ENCODE measurements at regions of chr2 and their contacts with region 1.

Region 1: GRCh38 chr2:217988014-217988839 is 14.6 kb downstream of the TNS1 start:
- DNase-seq: peak; percentile 62 to 95 (median 86)

Region 2: DNA sequence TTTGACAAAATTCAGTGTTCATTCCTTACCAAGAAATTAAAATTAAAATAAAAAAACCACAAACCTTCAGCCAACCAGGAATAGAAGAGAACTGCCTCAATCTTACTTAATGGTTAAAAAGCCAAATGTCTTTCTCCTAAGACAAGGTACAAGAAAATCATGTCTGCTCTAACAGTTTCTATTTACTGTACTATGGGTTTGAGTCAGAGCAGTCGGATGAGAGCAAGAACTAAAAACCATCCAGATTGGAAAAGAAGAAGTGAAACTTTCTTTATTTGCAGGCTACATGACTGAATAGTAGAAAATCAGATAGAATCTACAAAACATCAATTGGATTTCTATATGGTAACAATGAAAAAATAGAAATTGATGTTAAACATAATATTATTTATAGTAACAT is 572.9 kb before region 1 on chr2:
- intact Hi-C with region 1: no loop called
- DNase-seq: no peak

Region 3: GRCh38 chr2:217886720-217887309 is 101.4 kb before region 1 on chr2:
- intact Hi-C with region 1: loop called (anchors 5 kb)
- DNase-seq: peak; percentile 53 to 94 (median 86)

Region 4: DNA sequence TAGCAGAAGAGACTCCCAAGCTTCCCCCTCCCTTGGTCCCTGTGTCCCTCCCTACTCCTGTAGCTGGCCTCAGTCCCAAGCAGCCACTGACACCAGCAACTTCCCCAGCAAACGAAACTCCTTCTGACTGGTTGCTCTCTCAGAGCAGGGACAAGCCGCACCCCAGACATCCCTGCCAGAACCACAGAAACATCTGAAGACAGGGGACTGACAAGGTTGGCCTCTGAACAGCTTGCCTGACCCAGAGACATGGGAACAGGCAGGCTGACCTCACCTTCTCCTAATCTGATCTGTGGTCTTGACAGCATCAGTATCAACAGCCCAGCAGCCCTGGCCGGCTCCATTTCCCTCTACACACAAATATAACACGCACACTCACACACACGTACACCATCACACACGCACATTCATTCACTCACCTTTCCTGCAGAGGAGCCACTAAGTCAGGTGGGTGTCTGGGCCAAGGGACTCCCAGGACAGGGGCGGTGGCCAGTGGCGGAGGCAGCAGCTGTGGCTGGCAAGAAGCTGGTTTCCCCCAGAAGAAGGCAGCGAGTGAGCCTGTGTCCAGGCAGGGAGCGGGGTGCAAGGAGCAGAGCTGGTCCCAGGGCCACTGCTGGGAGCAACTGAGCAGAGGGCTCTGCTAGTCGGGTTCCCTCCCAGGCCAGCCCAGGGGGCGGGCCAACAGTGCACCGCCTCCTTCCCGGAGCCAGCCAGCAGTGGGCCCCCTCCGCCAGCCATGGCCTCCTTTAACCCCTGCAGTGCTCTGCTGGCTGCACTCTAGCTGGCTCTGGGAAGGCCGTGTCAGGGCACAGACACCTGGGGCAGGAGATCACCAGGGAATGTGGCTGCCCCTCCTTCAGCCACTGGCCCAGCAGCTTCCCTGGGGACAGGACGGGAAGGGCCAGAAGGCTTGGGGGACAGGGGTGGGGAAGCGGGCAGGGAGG is 44.5 kb before region 1 on chr2:
- intact Hi-C with region 1: loop called (anchors 5 kb)
- DNase-seq: peak; percentile 77 to 93 (median 88)

Region 5: DNA sequence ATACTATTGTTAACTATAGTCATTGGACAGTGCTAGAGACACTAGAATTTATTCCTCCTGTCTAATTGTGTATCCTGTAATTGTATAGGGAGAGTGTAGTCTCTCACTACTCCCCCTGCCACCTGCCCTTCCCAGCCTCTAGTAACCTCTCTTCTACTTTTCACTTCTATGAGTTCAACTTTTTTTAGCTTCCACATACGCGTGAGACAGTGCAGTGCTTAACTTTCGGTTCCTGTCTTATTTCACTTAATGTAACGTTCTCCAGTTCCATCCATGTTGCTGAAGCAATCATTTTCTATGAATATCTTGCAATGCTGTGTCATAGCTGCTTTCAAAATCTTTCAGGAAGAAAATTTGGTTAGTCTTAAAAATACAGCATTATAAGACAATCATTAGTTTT is 58.0 kb after region 1 on chr2:
- intact Hi-C with region 1: no loop called
- DNase-seq: peak in 2 of 42 donors; percentile 34 to 42

Region 6: DNA sequence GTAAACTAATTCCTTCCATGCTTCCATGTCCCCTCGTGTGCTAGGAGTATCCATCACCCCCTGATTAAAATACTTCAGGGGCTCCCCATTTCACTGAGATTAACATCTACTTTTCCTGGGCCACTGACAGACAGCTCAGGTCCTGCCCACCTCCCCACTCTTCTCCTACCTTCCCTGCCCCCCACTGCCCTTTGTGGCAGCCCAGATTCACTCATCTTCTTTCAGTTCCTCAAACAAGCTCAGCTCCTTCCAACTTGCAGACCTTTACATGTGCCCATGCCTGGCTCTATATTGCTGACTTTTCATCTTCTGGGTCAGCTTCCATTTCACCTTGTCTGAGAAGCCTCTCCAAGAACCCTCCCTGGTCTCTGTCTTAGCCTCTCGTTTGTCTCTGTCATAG is 92.8 kb after region 1 on chr2:
- intact Hi-C with region 1: no loop called
- DNase-seq: no peak